K562 (cell line): ENCODE measurements at regions of chr15 and their contacts with region 1.

Region 1: GRCh38 chr15:92097474-92098178 is 244.1 kb downstream of the SLCO3A1 start:
- DNase-seq: peak; percentile 36 to 53 (median 44)
- ATAC-seq: peak; percentile 97
- H3K4me3 ChIP-seq: no peak overlapping the region
- H3K27ac ChIP-seq: no peak overlapping the region
- H3K4me1 ChIP-seq: no peaks in the 10 kb centered on the region
- H3K27me3 ChIP-seq: peaks cover 0 to 9% of the 10 kb centered on the region in 2 experiments; a peak in 1 of 5 replicates
- CTCF ChIP-seq: peak; percentile 68 to 84 (median 81)
- EP300 ChIP-seq: no peak
- POLR2A ChIP-seq: no peak
- RAD21 ChIP-seq: peak; percentile 66 to 75

Region 2: DNA sequence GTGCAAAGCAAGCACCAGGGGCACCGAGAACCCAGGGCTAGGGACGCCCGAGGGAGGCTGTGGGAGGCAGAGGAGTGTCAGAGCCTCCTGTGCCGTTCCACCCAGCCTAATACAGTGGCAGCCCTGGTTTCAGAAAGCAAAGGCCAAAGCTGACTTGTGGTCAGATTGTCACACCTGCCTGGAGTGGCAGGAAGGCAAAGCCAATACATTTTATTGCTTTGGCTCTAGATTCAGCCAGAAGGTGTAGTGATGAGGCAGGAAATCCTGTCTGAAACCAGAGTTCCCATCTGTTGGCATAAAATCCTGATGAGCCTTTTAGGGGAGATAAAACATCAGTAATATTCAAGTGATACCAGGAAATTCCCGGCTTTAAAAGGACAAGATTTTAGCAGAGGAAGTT is 75.8 kb before region 1 on chr15:
- CTCF ChIA-PET with region 1: no interaction called
- POLR2A ChIA-PET with region 1: no interaction called
- in situ Hi-C with region 1: no loop called
- intact Hi-C with region 1: no loop called
- DNase-seq: no peak
- ATAC-seq: no peak
- H3K4me3 ChIP-seq: no peak overlapping the region
- H3K27ac ChIP-seq: no peak overlapping the region
- H3K4me1 ChIP-seq: no peaks in the 10 kb centered on the region
- H3K27me3 ChIP-seq: 0 out of 5 replicates have a peak, but pooled peaks cover 0 to 4% of the 10 kb centered on the region in 2 experiments
- CTCF ChIP-seq: no peak
- EP300 ChIP-seq: no peak
- POLR2A ChIP-seq: no peak
- RAD21 ChIP-seq: no peak

Region 3: DNA sequence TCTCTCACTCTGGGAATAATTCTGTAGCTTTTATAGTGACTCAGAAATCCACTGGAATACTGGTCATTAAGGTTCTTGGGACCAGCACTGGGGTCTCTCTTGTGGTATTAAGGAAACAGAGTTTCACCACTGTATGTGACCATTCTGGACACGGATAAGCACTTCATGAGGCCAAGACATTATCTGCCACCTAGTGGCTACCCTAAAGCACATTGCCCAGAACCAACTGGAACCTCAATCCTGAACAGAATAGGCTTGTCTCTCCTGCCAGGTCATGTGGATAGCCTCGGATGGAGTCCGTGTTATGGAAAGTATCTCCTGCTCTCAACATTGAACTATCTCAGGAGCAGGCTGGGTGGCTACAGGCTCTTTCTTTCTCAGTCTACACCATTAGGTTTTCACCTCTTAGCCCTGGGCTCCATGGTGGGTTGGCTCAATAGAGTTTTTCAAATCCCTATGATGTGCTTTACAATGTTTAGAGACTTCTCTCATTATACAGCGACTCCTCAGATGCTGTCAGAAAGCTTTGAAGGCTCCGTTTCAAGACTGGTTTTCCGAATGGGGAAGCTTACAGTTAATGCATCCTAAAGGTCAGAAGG is 128.5 kb after region 1 on chr15:
- CTCF ChIA-PET with region 1: no interaction called
- POLR2A ChIA-PET with region 1: no interaction called
- in situ Hi-C with region 1: no loop called
- intact Hi-C with region 1: loop called (anchors 5 kb)
- DNase-seq: peak in 3 of 4 experiments; percentile 10 to 13 (median 11)
- ATAC-seq: peak; percentile 63; the same call in 1 of the 3 replicates
- H3K4me3 ChIP-seq: no peak overlapping the region
- H3K27ac ChIP-seq: no peak overlapping the region
- H3K4me1 ChIP-seq: no peaks in the 10 kb centered on the region
- H3K27me3 ChIP-seq: no peaks in the 10 kb centered on the region
- CTCF ChIP-seq: peak; percentile 26 to 48 (median 40); a peak in 4 of 6 replicates
- EP300 ChIP-seq: no peak
- POLR2A ChIP-seq: no peak
- RAD21 ChIP-seq: 0 out of 4 replicates have a peak, but pooled peaks of 1 of the 2 experiments have one; percentile 13

Region 4: DNA sequence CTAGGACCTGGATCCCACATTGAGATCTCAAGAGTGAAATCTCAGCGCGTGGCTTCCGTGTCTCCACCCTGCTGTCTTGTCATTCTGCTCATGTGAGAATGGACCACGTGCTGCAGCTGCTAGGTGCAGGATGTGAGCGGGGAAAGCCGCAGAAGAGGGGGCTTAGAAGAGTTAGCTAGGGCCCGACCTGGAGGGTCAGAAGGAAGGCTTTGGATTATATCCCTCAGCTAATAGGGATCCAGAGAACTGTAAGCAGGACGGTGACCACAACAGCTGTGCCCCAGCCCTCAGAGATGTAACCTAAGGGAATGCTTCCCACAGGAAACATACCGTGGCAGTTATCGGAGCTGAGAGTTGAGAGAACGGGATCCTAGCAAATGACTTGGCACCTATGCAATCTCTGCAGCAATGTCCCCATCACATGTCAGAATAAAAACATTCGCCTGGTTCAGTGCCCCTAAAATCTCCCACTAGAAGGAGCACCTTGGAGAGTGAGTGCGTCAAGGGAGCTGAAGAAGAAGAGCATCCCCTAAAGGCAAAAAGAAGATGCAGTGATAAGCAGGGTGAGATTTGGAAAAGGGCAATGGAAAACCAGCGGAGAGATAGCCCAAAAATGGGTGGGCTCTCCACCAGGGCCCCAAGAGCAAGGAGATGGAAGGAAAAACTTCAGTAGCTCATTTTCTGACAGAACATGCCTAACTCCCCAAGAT is 219.1 kb after region 1 on chr15:
- CTCF ChIA-PET with region 1: no interaction called
- POLR2A ChIA-PET with region 1: no interaction called
- in situ Hi-C with region 1: no loop called
- intact Hi-C with region 1: no loop called
- DNase-seq: no peak
- ATAC-seq: no peak
- H3K4me3 ChIP-seq: no peak overlapping the region
- H3K27ac ChIP-seq: no peak overlapping the region
- H3K4me1 ChIP-seq: no peaks in the 10 kb centered on the region
- H3K27me3 ChIP-seq: peaks cover 0 to 9% of the 10 kb centered on the region in 2 experiments; a peak in 2 of 5 replicates
- CTCF ChIP-seq: no peak
- EP300 ChIP-seq: no peak
- POLR2A ChIP-seq: no peak
- RAD21 ChIP-seq: no peak

Region 5: DNA sequence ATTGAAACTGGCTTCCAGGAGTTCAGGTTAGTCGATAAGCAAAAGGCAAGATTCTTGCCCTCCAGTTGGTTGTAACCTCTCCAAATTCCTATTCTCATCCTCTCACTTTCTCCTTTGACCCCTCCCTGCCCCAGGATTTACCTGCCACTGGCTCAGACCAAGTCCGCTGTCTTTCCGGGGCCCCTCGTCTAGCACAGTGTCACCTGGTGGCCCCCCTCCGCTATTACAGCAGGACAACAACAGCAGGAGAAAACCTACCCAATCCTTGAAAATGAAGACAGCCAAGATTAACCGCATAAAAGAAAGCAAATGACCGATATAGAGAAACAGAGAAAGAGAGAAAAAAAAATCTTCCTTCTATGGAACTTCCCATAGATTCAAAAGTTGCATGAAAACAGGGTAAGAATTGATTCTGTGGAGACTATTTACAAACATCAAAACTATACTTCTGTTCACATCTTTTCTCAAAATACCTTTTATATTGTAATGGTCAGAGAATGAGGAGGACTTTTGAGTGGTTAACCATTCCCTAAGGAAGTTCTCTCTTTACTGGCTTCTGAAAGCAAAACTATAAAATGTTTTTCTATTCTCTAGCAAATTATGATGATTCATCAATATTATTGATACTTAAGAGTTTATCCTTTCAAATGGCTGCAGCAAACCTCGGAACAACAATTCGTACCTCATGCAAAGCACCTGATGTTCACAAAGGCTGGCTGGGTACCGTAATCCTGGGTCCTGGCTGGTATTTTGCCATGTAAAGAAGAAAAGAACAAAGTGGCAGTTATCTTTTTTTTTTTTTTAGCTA is 286.1 kb after region 1 on chr15:
- CTCF ChIA-PET with region 1: interaction called, 4 read pairs
- POLR2A ChIA-PET with region 1: no interaction called
- in situ Hi-C with region 1: loop called (anchors 10 kb)
- intact Hi-C with region 1: loop called (anchors 1 kb)
- DNase-seq: peak; percentile 38 to 73 (median 68)
- ATAC-seq: peak; percentile 84
- H3K4me3 ChIP-seq: no peak overlapping the region
- H3K27ac ChIP-seq: no peak overlapping the region
- H3K4me1 ChIP-seq: no peaks in the 10 kb centered on the region
- H3K27me3 ChIP-seq: peaks cover 0 to 11% of the 10 kb centered on the region in 2 experiments; a peak in 3 of 5 replicates
- CTCF ChIP-seq: peak; percentile 71 to 80 (median 71)
- EP300 ChIP-seq: no peak
- POLR2A ChIP-seq: no peak
- RAD21 ChIP-seq: peak; percentile 32 to 50

Region 6: GRCh38 chr15:92521624-92522008 is 424.0 kb after region 1 on chr15:
- CTCF ChIA-PET with region 1: no interaction called
- POLR2A ChIA-PET with region 1: no interaction called
- in situ Hi-C with region 1: no loop called
- intact Hi-C with region 1: loop called (anchors 10 kb)
- DNase-seq: peak; percentile 44 to 58 (median 54)
- ATAC-seq: peak; percentile 95
- H3K4me3 ChIP-seq: no peak overlapping the region
- H3K27ac ChIP-seq: no peak overlapping the region
- H3K4me1 ChIP-seq: no peaks in the 10 kb centered on the region
- H3K27me3 ChIP-seq: peaks cover 0 to 12% of the 10 kb centered on the region in 2 experiments; a peak in 2 of 5 replicates
- CTCF ChIP-seq: peak; percentile 72 to 81 (median 77)
- EP300 ChIP-seq: no peak
- POLR2A ChIP-seq: no peak
- RAD21 ChIP-seq: peak; percentile 69 to 75

Region 7: GRCh38 chr15:92683232-92683834 is 585.7 kb after region 1 on chr15:
- CTCF ChIA-PET with region 1: no interaction called
- POLR2A ChIA-PET with region 1: no interaction called
- in situ Hi-C with region 1: no loop called
- intact Hi-C with region 1: loop called (anchors 10 kb)
- DNase-seq: peak in 3 of 4 experiments; percentile 27 to 45 (median 29)
- ATAC-seq: peak; percentile 85
- H3K4me3 ChIP-seq: no peak overlapping the region
- H3K27ac ChIP-seq: no peak overlapping the region
- H3K4me1 ChIP-seq: no peaks in the 10 kb centered on the region
- H3K27me3 ChIP-seq: peaks cover 15 to 24% of the 10 kb centered on the region in 2 experiments
- CTCF ChIP-seq: peak; percentile 70 to 76 (median 72)
- EP300 ChIP-seq: no peak
- POLR2A ChIP-seq: no peak
- RAD21 ChIP-seq: peak; percentile 73 to 75

Region 8: GRCh38 chr15:92714477-92715401 is 617.1 kb after region 1 on chr15:
- CTCF ChIA-PET with region 1: interaction called, 3 read pairs
- POLR2A ChIA-PET with region 1: no interaction called
- in situ Hi-C with region 1: loop called (anchors 5 kb)
- intact Hi-C with region 1: loop called (anchors 2 kb)
- DNase-seq: peak; percentile 75 to 78 (median 76)
- ATAC-seq: peak; percentile 92
- H3K4me3 ChIP-seq: peak overlapping the region; percentile 13; the same call in 1 of the 2 replicates
- H3K27ac ChIP-seq: no peak overlapping the region
- H3K4me1 ChIP-seq: peaks cover 0 to 17% of the 10 kb centered on the region in 2 experiments; a peak in 2 of 5 replicates
- H3K27me3 ChIP-seq: peaks cover 19 to 49% of the 10 kb centered on the region in 2 experiments
- CTCF ChIP-seq: peak; percentile 86 to 93 (median 91)
- EP300 ChIP-seq: no peak
- POLR2A ChIP-seq: no peak
- RAD21 ChIP-seq: peak; percentile 79 to 87